Posterior vena cava (tissue), 2 donors: ENCODE measurements at regions of chr2 and their contacts with region 1.

Region 1: GRCh38 chr2:230666885-230667712 is 45.5 kb upstream of the CAB39 start:
- DNase-seq: peak; percentile 78

Region 2: GRCh38 chr2:229297247-229297646 is 1369.9 kb before region 1 on chr2:
- intact Hi-C with region 1: loop called in 1 of 2 experiments (anchors 10 kb)
- DNase-seq: no peak

Region 3: DNA sequence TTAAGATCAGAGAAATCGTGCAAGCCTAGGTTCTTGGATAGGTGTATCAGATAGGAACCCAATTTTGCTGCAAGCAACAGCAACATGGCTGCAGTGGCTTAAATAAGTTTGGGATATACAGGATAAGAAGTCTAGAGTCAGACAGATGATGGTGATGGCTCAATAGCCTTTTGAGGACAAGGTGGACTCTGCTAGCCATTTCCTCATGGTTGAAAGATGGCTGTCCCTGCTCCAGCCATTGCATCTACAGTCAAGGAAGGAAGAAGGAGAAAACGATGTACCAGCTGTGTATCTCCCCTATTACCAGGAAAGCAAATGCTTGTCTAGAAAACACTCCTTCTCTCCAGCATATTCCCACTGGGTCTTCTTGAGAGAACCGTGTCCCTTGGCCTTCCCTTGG is 15.4 kb after region 1 on chr2:
- intact Hi-C with region 1: loop called in 1 of 2 experiments (anchors 1 kb)
- DNase-seq: no peak